ENCODE measurements at regions of chr2 and their contacts with region 1.

Region 1: GRCh38 chr2:207223051-207223450 is 57.3 kb upstream of the KLF7 start:
- DNase-seq: no peak
- H3K4me3 Mint-ChIP-seq: peak overlapping the region; percentile 23
- H3K27ac Mint-ChIP-seq: peak overlapping the region; percentile 57
- H3K4me1 Mint-ChIP-seq: peaks cover 45% of the 10 kb centered on the region
- H3K27me3 Mint-ChIP-seq: no peaks in the 10 kb centered on the region

Region 2: GRCh38 chr2:206981739-206982340 is 241.2 kb before region 1 on chr2:
- intact Hi-C with region 1: loop called (anchors 5 kb)
- DNase-seq: peak; percentile 28
- H3K4me3 Mint-ChIP-seq: no peak overlapping the region
- H3K27ac Mint-ChIP-seq: no peak overlapping the region
- H3K4me1 Mint-ChIP-seq: peaks cover 20% of the 10 kb centered on the region
- H3K27me3 Mint-ChIP-seq: peaks cover 11% of the 10 kb centered on the region

Region 3: DNA sequence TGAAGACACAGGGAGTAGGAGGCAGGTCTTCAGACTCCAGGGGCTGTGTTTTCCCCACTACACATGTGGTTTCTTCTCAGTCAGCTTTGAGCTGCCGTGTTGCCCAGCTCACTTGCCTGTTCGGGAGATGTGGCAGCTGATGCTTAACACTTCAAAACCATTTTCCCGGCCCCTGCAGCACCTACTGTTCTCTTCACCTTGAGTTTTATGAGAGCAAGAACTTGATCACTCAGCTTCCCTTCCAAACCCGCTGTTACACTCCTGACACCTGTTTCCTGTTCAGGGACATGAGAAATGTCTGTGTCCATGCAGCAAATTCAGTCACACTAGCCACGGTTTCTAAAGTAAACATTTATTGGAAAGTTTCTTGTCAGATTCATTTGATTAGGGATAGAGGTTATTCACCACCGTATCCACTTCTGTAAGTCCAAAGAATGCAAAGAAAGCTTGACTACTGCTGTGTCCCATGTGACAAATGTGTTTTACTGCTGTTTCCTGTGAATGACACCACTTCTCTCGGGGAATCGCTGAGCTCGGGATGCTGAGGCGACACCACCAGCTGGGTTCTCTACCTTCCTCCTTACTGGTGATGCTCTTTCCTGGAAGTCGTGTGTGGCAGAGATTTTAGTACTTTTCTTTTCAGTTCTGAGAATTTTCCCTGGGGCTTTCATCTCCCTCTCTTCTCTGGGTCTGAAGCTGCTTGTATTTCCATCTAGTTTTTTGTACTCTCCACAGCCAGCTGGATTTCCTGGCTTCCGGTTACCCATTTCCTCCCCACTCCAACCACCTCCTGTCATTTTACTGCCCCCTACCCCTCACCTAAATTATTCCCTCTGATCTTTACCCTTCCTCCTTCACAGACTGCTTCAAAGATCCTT is 149.0 kb before region 1 on chr2:
- intact Hi-C with region 1: loop called (anchors 5 kb)
- DNase-seq: peak; percentile 32
- H3K4me3 Mint-ChIP-seq: peak overlapping the region; percentile 51
- H3K27ac Mint-ChIP-seq: peak overlapping the region; percentile 78
- H3K4me1 Mint-ChIP-seq: peaks cover 30% of the 10 kb centered on the region
- H3K27me3 Mint-ChIP-seq: no peaks in the 10 kb centered on the region

Region 4: DNA sequence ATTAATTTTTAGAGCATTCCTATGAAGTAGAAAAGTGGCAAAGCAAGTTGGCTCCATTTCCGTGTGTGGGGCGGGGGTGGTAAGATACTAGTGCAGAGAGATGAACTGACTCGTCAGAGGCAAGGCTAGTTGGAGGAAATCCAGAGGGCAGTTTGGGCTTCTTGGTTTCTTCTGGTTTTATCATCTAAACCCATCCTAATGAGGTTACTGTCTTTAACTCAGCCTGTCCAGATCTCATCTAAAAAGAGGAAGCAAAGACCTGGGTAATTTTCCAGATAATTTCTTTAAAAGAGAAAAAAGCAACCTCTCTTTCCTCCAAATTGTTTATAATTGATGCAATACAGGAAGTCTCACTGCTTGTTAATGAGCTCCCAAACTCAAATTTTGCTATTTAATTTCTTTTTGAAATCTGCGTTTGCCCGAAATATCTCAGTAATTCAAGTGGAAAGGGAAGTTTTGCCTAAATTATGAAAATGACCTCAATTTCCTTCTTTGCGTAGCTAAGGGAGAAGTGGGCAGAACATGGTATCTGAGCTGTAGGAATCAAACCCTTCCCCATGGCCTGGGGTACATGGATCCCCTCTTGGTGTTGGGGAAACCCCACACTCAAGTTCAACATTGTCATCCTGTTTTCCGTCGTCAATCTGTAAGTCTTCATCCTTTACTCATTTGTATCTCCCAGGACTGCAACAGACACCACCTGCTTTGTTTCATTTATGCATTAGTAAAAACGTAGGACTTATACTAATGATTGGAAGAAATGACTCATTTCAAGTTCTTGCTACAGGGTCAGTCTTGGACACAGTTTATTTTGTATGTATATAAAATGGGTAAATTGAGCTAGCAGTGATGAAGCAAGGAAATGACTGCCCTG is 31.8 kb after region 1 on chr2:
- intact Hi-C with region 1: loop called (anchors 1 kb)
- DNase-seq: no peak
- H3K4me3 Mint-ChIP-seq: no peak overlapping the region
- H3K27ac Mint-ChIP-seq: peak overlapping the region; percentile 81
- H3K4me1 Mint-ChIP-seq: peaks cover 69% of the 10 kb centered on the region
- H3K27me3 Mint-ChIP-seq: no peaks in the 10 kb centered on the region

Region 5: GRCh38 chr2:207317378-207317984 is 94.4 kb after region 1 on chr2:
- intact Hi-C with region 1: loop called (anchors 1 kb)
- DNase-seq: no peak
- H3K4me3 Mint-ChIP-seq: no peak overlapping the region
- H3K27ac Mint-ChIP-seq: peak overlapping the region; percentile 77
- H3K4me1 Mint-ChIP-seq: peaks cover 64% of the 10 kb centered on the region
- H3K27me3 Mint-ChIP-seq: no peaks in the 10 kb centered on the region

Measured in activated T-helper 2 cell treated with anti-CD3 and anti-CD28 coated beads, Interferon-gamma antibody, Interleukin-2, Interleukin-4, amounts not matched to agents 10 μg/mL and 5 μg/mL and 100 μg/mL, durations not matched to agents 14 hours and 24 hours and 36 hours (primary cell).